ENCODE measurements at regions of chr14 and their contacts with region 1.

Region 1: GRCh38 chr14:94136575-94137331 is 7.3 kb upstream of the IFI27L2 start:
- DNase-seq: peak; percentile 92
- H3K4me3 ChIP-seq: no peak overlapping the region
- H3K27ac ChIP-seq: no peak overlapping the region
- H3K4me1 ChIP-seq: no peaks in the 10 kb centered on the region
- H3K27me3 ChIP-seq: no peaks in the 10 kb centered on the region
- CTCF ChIP-seq: peak; percentile 94 to 98 (median 97)
- EP300 ChIP-seq: no peak
- POLR2A ChIP-seq: no peak

Region 2: DNA sequence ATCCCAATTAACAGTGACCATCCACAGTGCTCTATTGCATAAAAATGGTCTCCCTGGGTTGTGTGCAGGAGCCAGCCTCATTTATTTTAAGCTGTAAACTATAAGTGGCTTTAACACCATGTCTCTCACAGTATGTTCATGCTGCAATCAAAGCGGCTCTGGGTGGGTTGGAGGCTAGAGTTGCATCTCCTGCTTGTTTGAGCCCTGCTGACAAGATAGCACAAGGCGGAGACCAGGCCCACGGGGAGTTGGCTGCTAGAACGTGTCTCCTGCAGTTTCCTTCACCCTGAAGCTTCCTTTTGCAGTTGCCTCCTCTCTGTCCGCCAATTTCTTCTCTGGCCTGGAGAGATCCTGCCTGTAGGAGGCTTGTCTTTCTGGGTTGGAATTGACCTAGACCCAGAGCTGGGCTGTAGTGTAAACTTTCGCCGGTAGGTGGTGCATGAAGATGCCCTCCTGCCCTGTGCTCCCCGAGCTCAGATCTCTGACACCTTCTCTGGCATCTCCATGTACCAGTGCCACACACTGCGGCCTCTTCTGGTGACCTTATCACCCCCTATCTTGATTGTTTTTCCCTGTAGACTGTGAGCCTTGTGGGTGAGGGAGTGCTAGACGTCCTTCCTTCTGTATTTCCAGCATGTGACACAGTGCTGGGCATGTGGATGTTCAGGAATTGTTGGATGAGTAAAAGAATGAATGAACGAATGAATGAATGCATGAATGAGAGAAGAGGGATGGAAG is 100.3 kb before region 1 on chr14:
- in situ Hi-C with region 1: loop called (anchors 5 to 10 kb)
- intact Hi-C with region 1: loop called (anchors 5 kb)
- DNase-seq: peak; percentile 81
- H3K4me3 ChIP-seq: no peak overlapping the region
- H3K27ac ChIP-seq: no peak overlapping the region
- H3K4me1 ChIP-seq: peaks cover 0 to 5% (median 0%) of the 10 kb centered on the region in 4 donors
- H3K27me3 ChIP-seq: no peaks in the 10 kb centered on the region
- CTCF ChIP-seq: peak; percentile 80 to 89 (median 81)
- EP300 ChIP-seq: no peak
- POLR2A ChIP-seq: no peak

Region 3: GRCh38 chr14:94041551-94042346 is 95.0 kb before region 1 on chr14:
- in situ Hi-C with region 1: loop called (anchors 5 to 10 kb)
- intact Hi-C with region 1: loop called (anchors 5 kb)
- DNase-seq: no peak
- H3K4me3 ChIP-seq: no peak overlapping the region
- H3K27ac ChIP-seq: no peak overlapping the region
- H3K4me1 ChIP-seq: no peaks in the 10 kb centered on the region
- H3K27me3 ChIP-seq: no peaks in the 10 kb centered on the region
- CTCF ChIP-seq: no peak
- EP300 ChIP-seq: no peak
- POLR2A ChIP-seq: no peak

Region 4: DNA sequence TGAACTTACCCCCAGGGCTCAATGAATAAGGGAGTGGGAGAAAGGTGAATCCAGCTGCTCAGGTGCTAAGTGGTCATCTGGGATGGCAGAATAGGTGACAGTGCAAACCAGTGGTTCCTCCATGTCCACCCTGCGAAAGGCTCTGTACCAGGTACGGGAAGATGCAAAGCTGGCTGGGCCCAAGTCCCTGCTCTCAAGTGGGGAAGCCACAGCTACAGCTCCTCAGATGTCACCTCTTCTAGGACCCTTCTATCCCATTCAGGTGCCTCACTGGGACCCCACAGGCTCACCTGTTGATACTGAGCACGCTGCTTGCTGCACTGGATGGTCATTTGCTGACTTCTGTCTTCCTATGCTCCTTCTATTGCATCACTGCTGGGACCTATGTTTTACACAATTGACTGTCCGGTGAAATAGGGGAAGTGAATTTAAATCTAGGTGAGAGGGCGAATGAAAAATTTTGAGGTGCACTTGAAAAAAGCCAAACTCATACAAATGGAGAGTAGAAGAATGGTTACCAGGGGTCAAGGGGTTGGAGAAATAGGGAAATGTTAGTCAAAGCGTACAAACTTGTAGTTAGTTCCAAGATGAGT is 17.1 kb after region 1 on chr14:
- in situ Hi-C with region 1: no loop called
- intact Hi-C with region 1: no loop called
- DNase-seq: no peak
- H3K4me3 ChIP-seq: no peak overlapping the region
- H3K27ac ChIP-seq: no peak overlapping the region
- H3K4me1 ChIP-seq: no peaks in the 10 kb centered on the region
- H3K27me3 ChIP-seq: no peaks in the 10 kb centered on the region
- CTCF ChIP-seq: no peak
- EP300 ChIP-seq: no peak
- POLR2A ChIP-seq: no peak

Region 5: DNA sequence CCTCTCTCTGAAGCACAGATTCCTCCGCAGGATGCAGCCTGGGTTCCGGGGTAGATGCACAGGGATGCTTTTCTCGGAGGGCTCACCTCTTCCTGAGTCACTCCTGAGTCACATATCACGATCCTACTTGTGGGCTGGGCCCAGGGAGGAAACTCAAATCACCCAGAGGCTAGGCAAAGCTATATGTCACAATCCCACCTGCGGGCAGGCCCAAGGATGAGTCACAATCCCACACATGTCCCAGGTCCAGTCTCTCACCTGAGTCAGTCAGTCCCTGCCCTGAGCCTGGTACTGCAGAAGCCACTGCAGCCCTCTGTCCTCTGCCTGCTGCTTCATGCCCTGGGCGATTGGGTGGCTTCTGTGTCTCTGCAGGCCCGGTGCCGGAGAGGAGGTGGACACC is 782.2 kb after region 1 on chr14:
- in situ Hi-C with region 1: no loop called
- intact Hi-C with region 1: no loop called
- DNase-seq: peak; percentile 0
- H3K4me3 ChIP-seq: no peak overlapping the region
- H3K27ac ChIP-seq: no peak overlapping the region
- H3K4me1 ChIP-seq: no peaks in the 10 kb centered on the region
- H3K27me3 ChIP-seq: no peaks in the 10 kb centered on the region
- CTCF ChIP-seq: no peak
- EP300 ChIP-seq: no peak
- POLR2A ChIP-seq: no peak

Region 6: DNA sequence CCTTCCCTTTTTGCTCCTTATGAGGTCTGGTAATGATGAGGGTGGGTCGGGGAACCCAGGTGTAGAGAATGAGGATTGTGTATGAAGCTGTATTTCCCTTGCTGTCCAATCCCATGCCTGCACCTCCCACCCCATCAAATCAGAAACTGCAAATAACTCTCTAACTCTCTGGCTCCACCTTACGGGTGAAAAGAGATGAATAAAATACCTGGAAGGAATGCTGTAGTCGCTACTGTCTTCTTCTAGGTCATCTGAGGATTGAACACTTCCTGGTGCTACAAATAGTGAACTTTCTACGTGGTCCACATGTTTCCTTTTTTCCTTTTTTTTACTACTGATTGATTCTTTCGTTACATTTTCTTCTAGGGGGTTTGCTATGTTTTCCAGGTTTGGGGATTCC is 1059.5 kb after region 1 on chr14:
- in situ Hi-C with region 1: no loop called
- intact Hi-C with region 1: no loop called
- DNase-seq: no peak
- H3K4me3 ChIP-seq: no peak overlapping the region
- H3K27ac ChIP-seq: no peak overlapping the region
- H3K4me1 ChIP-seq: no peaks in the 10 kb centered on the region
- H3K27me3 ChIP-seq: no peaks in the 10 kb centered on the region
- CTCF ChIP-seq: peak; percentile 25 to 36 (median 34)
- EP300 ChIP-seq: no peak
- POLR2A ChIP-seq: no peak

Measured in transverse colon (tissue), 4 donors.